Calu3 (cell line): ENCODE measurements at regions of chr4 and their contacts with region 1.

Region 1: DNA sequence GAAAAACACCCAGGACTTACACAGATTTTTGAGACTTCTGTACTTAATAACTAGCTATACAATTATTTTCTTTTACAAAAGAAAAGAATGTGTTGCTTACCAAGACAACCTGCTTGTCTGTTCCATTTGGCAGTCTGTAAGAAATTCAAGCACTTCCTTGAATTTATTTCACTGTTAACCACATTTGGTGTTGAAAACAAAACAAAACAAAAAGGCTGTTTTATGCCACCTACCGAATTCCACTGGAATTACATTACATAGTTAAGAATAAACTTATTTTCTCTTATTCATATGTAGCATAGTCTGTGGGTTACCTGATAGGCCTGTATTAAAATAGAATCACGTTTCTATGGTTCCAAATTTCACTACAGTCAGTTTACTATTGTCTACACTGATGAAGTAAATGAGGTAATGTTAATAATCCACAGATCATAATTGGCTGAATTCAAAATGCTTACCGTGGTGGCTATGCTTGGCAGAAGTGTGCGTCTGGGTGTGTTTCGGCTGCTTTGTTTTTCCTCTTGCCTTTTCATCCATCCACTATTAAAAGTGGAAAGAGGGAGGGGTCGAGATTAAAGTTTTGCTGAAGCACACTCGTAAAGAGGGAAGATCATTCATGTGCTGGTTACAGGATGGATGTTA is at the start of gene TLR1:
- DNase-seq: no peak
- H3K4me3 Mint-ChIP-seq: peak within 1 kb of the TSS; percentile 16
- H3K27ac Mint-ChIP-seq: no peak within 1 kb of the TSS
- H3K4me1 Mint-ChIP-seq: no peaks in the 10 kb centered on the region
- H3K27me3 Mint-ChIP-seq: no peaks in the 10 kb centered on the region
- CTCF ChIP-seq: peak; percentile 15
- total RNA-seq, gene TLR1: 1.1 and 1.3 TPM in 2 replicates

Region 2: DNA sequence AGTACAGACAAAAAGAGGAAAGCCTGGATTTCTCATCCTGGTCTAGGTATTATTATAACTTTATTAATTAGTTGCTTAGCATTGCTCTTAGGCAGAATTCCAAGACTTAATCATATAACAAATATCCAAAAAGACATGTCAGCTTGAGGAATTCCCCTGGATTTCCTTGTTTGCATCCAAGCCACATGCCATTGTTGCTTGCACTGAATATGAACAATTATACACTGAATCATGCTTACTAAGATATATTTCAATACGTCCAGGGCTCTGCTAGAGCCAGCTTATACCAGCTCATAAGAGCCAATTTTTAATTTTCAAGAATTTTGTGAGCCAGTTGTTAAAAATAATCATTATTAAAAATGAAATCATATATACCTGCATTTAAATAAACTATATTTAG is 16.4 kb before region 1 on chr4:
- CTCF ChIA-PET with region 1: no interaction called
- intact Hi-C with region 1: loop called (anchors 1 kb)
- DNase-seq: no peak
- H3K4me3 Mint-ChIP-seq: no peak overlapping the region
- H3K27ac Mint-ChIP-seq: peak overlapping the region; percentile 22
- H3K4me1 Mint-ChIP-seq: peaks cover 10% of the 10 kb centered on the region
- H3K27me3 Mint-ChIP-seq: no peaks in the 10 kb centered on the region
- CTCF ChIP-seq: no peak